Adrenal gland (tissue), 19 donors: ENCODE measurements at regions of chr1 and their contacts with region 1.

Region 1: DNA sequence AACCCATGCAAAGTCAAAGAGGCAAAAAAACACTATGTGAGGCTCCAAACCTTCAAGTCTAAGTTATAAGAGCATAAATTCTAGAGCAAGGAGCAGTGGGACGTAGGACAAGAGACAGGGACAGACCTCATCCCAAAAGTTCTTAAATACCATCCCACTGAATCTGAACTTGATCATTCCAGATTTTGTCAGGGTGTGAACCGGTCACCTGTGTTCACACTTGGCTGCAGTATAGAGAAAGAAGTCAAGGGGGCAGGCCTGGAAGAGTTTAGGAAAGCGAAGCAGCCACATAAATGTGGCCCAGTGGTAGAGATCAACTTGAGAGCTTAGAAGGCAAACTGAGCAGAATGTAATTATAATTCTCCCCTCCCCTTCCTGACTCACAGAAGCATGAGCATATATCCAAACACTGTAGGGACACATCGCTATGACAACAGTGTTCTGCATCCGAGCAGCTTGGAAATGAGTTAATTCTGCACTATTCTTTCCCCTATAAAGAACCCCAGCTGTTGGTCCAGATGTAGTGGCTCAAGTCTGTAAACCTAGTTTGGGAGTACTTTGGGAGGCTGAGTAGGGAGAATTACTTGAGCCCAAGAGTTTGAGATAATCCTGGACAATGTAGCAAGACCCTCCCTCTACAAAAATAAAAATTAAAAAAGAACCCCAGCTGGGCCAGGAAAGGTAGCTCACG is 2.7 kb downstream of the AKR7A2 start:
- DNase-seq: peak in 1 of 7 donors; percentile 3
- H3K4me3 ChIP-seq: no peak overlapping the region
- H3K27ac ChIP-seq: no peak overlapping the region
- H3K4me1 ChIP-seq: peaks cover 22 to 32% of the 10 kb centered on the region in 2 donors
- H3K27me3 ChIP-seq: no peaks in the 10 kb centered on the region
- CTCF ChIP-seq: no peak
- POLR2A ChIP-seq: no peak

Region 2: DNA sequence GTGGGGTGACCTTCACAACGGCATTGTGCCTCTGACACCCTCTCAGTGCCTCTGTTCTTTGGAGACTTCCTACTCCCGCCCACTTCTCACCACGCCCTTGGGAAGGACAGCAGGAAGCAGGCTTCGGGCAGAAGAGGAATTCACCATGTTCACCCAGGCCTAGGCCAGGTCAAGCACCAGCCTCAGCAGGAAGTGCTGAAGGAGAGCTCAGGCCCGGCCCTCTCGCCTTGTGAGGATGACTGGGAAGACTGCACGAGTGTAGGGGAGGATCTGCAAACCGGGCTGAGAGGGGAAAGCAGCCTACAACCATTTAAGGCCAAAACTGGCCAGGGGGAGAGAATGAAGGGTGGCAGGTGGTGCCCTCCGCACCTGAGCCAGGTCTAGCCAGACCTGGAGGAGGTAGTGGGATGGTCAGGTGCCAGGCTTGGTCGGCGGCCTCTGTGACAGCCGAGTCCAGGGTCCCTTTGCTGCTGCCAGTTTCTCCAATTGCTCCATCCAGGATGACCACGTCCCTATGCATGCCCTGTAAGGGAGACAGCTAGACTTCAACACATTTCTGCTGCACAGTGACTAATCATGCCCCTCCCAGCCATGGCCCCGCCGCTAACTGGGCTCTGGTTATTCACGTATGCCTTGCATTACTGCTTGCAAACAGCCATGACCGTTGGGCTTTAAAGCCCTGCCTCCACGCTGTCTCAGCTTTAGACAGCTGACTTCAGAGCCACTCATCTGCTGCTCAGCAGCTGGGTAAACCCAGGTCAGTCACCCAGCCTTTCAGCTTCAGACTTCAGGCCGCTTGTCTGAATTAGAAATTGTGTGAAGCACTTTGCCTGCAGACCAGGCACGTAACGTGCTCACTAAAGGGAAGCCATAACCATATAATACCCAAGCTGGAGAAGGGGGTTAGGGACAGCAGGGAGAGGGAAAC is 48.8 kb before region 1 on chr1:
- intact Hi-C with region 1: loop called in 1 of 2 experiments (anchors 5 kb)
- DNase-seq: peak in 3 of 7 donors; percentile 30 to 63 (median 46)
- H3K4me3 ChIP-seq: no peak overlapping the region
- H3K27ac ChIP-seq: no peak overlapping the region
- H3K4me1 ChIP-seq: no peaks in the 10 kb centered on the region
- H3K27me3 ChIP-seq: no peaks in the 10 kb centered on the region
- CTCF ChIP-seq: no peak
- POLR2A ChIP-seq: no peak

Region 3: DNA sequence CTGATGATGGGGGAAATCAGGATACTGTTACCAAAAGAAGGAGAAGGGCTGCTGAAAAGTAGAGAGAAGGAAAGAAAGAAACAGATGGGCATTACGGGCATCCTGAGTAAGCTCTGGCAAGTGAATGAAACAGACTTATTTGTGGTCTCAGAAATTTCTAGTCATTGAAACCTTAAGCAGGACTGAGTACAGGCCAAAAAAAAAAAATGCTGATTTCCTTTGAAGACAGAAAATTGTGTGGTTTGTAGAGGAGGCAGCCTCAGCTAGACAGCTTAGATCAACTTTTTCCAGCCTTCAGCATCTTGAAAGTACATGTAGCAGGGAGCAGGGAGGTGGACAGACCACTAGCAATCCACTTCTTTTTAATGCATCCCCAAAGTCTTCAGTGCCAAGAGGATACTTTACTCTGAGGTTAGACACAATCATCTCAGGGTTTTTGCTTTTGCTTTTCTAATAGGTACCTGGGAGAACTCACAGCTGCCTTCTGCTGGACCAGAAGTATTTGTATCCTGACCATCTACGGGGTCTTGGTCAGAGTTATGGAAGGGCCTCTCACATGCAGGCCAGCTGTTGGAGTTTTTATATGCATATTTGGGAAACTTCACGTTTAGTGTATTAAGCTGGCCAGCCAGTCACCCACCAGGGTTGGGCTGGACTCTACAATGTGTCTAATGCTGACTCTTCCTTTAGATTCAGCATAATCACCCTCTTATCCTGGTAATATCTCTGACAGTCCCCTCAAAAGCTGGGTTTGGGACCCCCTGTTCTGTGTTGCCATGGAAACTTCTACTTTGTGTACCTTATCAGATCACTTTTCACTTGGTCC is 186.7 kb after region 1 on chr1:
- intact Hi-C with region 1: no loop called
- DNase-seq: no peak
- H3K4me3 ChIP-seq: no peak overlapping the region
- H3K27ac ChIP-seq: peak overlapping the region in 3 of 5 donors; percentile 35 to 64 (median 42)
- H3K4me1 ChIP-seq: peaks cover 0 to 25% of the 10 kb centered on the region in 2 donors
- H3K27me3 ChIP-seq: no peaks in the 10 kb centered on the region
- CTCF ChIP-seq: no peak
- POLR2A ChIP-seq: no peak

Region 4: GRCh38 chr1:19628879-19629278 is 319.6 kb after region 1 on chr1:
- intact Hi-C with region 1: no loop called
- DNase-seq: peak in 1 of 7 donors; percentile 46
- H3K4me3 ChIP-seq: no peak overlapping the region
- H3K27ac ChIP-seq: no peak overlapping the region
- H3K4me1 ChIP-seq: peaks cover 0 to 7% of the 10 kb centered on the region in 2 donors
- H3K27me3 ChIP-seq: no peaks in the 10 kb centered on the region
- CTCF ChIP-seq: no peak
- POLR2A ChIP-seq: no peak